PC-3 (cell line): ENCODE measurements at regions of chr17 and their contacts with region 1.

Region 1: DNA sequence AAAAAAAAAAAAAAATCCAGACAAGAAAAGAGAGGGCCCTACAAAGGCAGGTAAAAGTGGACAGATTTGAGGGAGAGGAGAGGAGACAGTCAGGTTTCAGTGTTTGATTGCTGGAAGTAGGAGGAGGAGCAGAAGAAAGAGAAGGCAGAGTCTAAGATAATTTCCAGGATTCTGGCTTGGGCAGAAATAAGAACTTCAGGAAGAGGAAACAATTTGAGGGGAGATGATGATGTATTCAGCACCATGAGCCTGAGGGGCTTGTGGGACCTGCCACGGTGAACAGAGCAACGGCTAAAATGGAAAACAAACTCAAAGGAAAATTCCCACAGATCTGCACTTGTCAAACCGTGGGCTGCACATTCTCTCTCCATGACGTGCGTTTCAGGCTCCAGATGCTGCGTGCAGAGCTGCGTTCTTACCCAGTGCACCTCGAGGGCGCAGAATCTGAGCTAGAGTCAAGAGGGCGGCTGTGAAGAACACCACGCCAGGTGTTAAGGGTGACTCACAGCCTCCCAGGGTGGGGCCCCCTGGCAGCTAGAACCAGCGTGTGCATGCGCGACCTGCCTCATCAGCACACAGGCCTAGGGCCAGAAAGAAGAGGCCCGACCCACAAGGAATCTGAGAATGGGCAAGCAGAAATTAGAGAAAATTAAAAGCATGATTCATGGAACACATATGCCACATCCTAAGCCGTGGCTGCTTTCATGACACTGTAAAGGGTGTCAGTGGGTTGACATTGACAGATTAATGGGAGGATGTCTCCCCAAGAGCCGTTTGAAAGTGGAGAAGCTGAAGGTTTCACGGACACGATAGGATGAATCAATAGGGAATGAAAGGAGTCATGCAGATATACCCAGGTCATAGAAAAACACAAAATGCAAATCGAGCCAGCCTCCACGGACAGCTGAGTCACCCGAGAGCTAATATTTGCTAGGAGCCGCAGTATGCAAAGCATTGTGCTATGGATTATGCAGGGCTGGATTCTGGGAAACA is 29.1 kb downstream of the MARCHF10 start:
- DNase-seq: peak; percentile 98
- ATAC-seq: peak; percentile 88
- H3K4me3 ChIP-seq: peak overlapping the region; percentile 39
- H3K27ac ChIP-seq: peak overlapping the region; percentile 92
- H3K4me1 ChIP-seq: peaks cover 47% of the 10 kb centered on the region
- H3K27me3 ChIP-seq: no peaks in the 10 kb centered on the region
- CTCF ChIP-seq: no peak

Region 2: GRCh38 chr17:62627219-62627910 is 151.6 kb before region 1 on chr17 and contains the start of gene MRC2:
- CTCF ChIA-PET with region 1: no interaction called
- POLR2A ChIA-PET with region 1: no interaction called
- intact Hi-C with region 1: no loop called
- DNase-seq: peak; percentile 58
- ATAC-seq: peak; percentile 66
- H3K4me3 ChIP-seq: peak within 1 kb of the TSS; percentile 88
- H3K27ac ChIP-seq: no peak within 1 kb of the TSS
- H3K4me1 ChIP-seq: peaks cover 7% of the 10 kb centered on the region
- H3K27me3 ChIP-seq: no peaks in the 10 kb centered on the region
- CTCF ChIP-seq: no peak
- total RNA-seq, gene MRC2: 13.5 and 17.2 TPM in 2 replicates

Region 3: GRCh38 chr17:62722625-62723024 is 56.4 kb before region 1 on chr17:
- CTCF ChIA-PET with region 1: interaction called, 12 read pairs
- POLR2A ChIA-PET with region 1: interaction called, 3 read pairs
- intact Hi-C with region 1: no loop called
- DNase-seq: no peak
- ATAC-seq: no peak
- H3K4me3 ChIP-seq: no peak overlapping the region
- H3K27ac ChIP-seq: no peak overlapping the region
- H3K4me1 ChIP-seq: peaks cover 22% of the 10 kb centered on the region
- H3K27me3 ChIP-seq: no peaks in the 10 kb centered on the region
- CTCF ChIP-seq: no peak